ENCODE measurements at regions of chr17 and their contacts with region 1.

Region 1: DNA sequence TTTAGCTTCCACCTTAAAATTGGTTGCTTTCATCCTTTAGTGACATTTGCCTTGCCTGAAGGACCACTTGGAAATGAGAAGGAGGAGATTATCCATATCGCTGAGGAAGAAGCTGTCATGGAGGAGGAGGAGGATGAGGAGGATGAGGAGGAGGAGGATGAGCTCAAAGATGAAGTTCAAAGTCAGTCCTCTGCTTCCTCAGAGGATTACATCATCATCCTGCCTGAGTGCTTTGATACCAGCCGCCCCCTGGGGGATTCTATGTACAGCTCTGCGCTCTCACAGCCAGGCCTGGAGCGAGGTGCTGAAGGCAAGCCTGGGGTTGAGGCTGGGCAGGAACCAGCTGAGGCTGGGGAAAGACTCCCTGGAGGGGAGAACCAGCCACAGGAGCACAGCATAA is 11.5 kb upstream of the TMEM106A start:
- DNase-seq: no peak
- ATAC-seq: no peak
- H3K4me3 ChIP-seq: no peak overlapping the region
- H3K4me3 Mint-ChIP-seq: no peak overlapping the region
- H3K27ac ChIP-seq: no peak overlapping the region
- H3K27ac Mint-ChIP-seq: no peak overlapping the region
- H3K4me1 ChIP-seq: no peaks in the 10 kb centered on the region
- H3K4me1 Mint-ChIP-seq: no peaks in the 10 kb centered on the region
- H3K27me3 ChIP-seq: no peaks in the 10 kb centered on the region
- H3K27me3 Mint-ChIP-seq: no peaks in the 10 kb centered on the region
- CTCF ChIP-seq: no peak

Region 2: DNA sequence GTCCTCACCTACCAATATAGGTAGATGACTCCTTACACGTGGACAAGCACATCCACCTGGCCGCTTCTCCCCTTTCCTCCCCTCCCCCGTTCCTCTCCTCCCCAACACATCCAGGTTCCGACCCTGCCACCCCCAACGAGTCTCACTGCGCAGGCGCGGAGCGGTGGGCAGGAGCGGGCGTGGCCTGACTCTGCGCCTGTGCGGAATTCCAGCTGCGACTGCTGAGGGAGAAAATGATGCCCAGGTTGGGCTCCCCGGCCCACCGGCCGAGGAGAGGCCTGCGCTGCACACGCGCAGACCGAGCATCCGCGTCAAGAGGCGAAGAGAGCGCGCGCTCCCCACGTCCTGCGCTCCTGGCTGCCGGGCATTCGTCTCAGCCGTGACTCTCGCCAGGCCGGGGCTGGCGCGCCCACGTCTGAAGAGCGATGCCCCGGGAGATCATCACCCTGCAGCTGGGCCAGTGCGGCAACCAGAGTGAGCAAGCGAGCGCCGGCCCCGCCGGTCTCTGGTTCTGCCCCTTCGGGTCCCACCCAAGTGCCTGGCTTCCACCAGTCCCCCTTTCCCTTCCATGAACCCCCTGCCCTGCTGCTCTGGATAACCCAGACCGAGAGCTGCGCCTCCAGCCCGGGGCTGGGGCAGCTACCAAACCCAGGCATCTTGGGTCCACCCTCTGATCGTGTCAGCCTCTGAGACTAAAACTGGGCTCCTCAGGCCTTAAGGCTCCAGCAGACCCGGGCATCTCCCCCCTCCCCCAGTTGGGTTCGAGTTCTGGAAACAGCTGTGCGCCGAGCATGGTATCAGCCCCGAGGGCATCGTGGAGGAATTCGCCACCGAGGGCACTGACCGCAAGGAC is 540.8 kb before region 1 on chr17 and contains the start of gene TUBG2:
- CTCF ChIA-PET with region 1: no interaction called
- POLR2A ChIA-PET with region 1: no interaction called
- intact Hi-C with region 1: no loop called
- DNase-seq: peak in 12 of 14 experiments; percentile 49 to 85 (median 69)
- ATAC-seq: peak; percentile 78
- H3K4me3 ChIP-seq: peak within 1 kb of the TSS; percentile 70
- H3K4me3 Mint-ChIP-seq: peak within 1 kb of the TSS; percentile 89
- H3K27ac ChIP-seq: no peak within 1 kb of the TSS
- H3K27ac Mint-ChIP-seq: peak within 1 kb of the TSS; percentile 27
- H3K4me1 ChIP-seq: peaks cover 14% of the 10 kb centered on the region
- H3K4me1 Mint-ChIP-seq: peaks cover 21% of the 10 kb centered on the region
- H3K27me3 ChIP-seq: peaks cover 0 to 2% of the 10 kb centered on the region in 2 experiments
- H3K27me3 Mint-ChIP-seq: peaks cover 5% of the 10 kb centered on the region
- CTCF ChIP-seq: no peak
- total RNA-seq, gene TUBG2: 9.0 to 9.7 TPM

Region 3: GRCh38 chr17:42843358-42843934 is 356.7 kb before region 1 on chr17:
- CTCF ChIA-PET with region 1: no interaction called
- POLR2A ChIA-PET with region 1: no interaction called
- intact Hi-C with region 1: loop called in 1 of 2 experiments (anchors 10 kb)
- DNase-seq: peak in 4 of 14 experiments; percentile 5 to 54 (median 35)
- ATAC-seq: peak; percentile 56
- H3K4me3 ChIP-seq: no peak overlapping the region
- H3K4me3 Mint-ChIP-seq: no peak overlapping the region
- H3K27ac ChIP-seq: no peak overlapping the region
- H3K27ac Mint-ChIP-seq: no peak overlapping the region
- H3K4me1 ChIP-seq: no peaks in the 10 kb centered on the region
- H3K4me1 Mint-ChIP-seq: no peaks in the 10 kb centered on the region
- H3K27me3 ChIP-seq: no peaks in the 10 kb centered on the region
- H3K27me3 Mint-ChIP-seq: no peaks in the 10 kb centered on the region
- CTCF ChIP-seq: peak; percentile 56

Region 4: GRCh38 chr17:43393944-43394482 is 193.9 kb after region 1 on chr17:
- CTCF ChIA-PET with region 1: no interaction called
- POLR2A ChIA-PET with region 1: no interaction called
- intact Hi-C with region 1: no loop called
- DNase-seq: peak; percentile 77 to 94 (median 89)
- ATAC-seq: peak; percentile 27
- H3K4me3 ChIP-seq: no peak overlapping the region
- H3K4me3 Mint-ChIP-seq: peak overlapping the region; percentile 49
- H3K27ac ChIP-seq: peak overlapping the region in 1 of 2 donors; percentile 14
- H3K27ac Mint-ChIP-seq: peak overlapping the region; percentile 16
- H3K4me1 ChIP-seq: peaks cover 40% of the 10 kb centered on the region
- H3K4me1 Mint-ChIP-seq: peaks cover 37% of the 10 kb centered on the region
- H3K27me3 ChIP-seq: no peaks in the 10 kb centered on the region
- H3K27me3 Mint-ChIP-seq: no peaks in the 10 kb centered on the region
- CTCF ChIP-seq: peak; percentile 90